MCF 10A (cell line): ENCODE measurements at regions of chr18 and their contacts with region 1.

Region 1: GRCh38 chr18:3995476-3996102 is 459.5 kb downstream of the DLGAP1 start:
- DNase-seq: peak; percentile 77
- H3K4me3 Mint-ChIP-seq: no peak overlapping the region
- H3K27ac Mint-ChIP-seq: no peak overlapping the region
- H3K4me1 Mint-ChIP-seq: no peaks in the 10 kb centered on the region
- H3K27me3 Mint-ChIP-seq: no peaks in the 10 kb centered on the region
- CTCF ChIP-seq: peak; percentile 73

Region 2: DNA sequence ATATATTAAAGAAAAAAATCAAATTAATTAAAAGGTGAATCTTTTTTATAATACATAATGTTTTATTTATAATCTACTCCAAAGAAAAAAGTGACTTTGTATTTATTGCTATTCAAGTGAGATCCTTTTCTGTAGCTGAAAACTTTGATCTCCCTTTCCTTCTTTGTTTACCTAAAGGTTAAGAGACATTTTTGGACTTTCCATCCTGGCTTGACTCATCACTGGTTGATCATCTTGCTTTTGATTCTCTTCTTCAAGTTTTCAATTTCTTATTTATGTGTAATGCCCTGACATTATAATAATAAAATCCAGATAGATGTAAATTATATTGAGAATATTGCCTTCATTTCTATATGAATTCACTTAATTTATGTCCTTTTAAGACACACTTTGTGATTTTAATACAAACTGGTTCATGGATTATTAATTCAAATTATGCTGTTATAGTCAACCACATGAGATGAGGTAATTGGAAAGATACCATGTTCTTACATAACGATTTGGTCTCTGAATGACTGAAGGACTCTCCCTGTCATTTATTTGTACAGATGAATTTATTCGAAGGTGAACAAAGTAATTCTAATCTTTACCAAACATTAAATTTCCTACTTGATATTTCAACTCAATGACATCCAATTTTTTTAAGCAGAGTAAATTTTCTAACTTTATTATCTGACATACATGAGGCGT is 361.2 kb before region 1 on chr18:
- CTCF ChIA-PET with region 1: no interaction called
- POLR2A ChIA-PET with region 1: no interaction called
- intact Hi-C with region 1: no loop called
- DNase-seq: no peak
- H3K4me3 Mint-ChIP-seq: no peak overlapping the region
- H3K27ac Mint-ChIP-seq: no peak overlapping the region
- H3K4me1 Mint-ChIP-seq: no peaks in the 10 kb centered on the region
- H3K27me3 Mint-ChIP-seq: no peaks in the 10 kb centered on the region
- CTCF ChIP-seq: no peak

Region 3: DNA sequence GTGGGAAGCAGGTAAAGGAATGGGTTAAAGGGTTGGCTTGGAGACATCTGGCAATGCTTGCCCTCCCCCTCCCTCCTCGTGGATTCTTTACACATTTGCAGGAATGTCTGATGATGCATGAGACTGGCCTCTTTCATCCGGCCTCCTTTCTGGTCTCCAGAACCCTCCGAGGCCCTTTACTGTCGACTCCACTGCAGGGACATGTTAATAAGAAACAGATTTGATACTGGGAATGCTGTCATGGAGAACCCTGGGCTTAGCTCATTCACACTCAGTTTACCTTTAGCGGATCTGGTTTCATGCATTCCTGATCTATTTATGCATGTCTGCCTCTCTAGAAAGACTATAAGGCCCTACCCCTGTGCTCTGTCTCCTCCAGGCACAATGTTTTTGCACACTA is 306.9 kb before region 1 on chr18:
- CTCF ChIA-PET with region 1: interaction called, 13 read pairs
- POLR2A ChIA-PET with region 1: no interaction called
- intact Hi-C with region 1: no loop called
- DNase-seq: peak; percentile 31
- H3K4me3 Mint-ChIP-seq: no peak overlapping the region
- H3K27ac Mint-ChIP-seq: no peak overlapping the region
- H3K4me1 Mint-ChIP-seq: peaks cover 9% of the 10 kb centered on the region
- H3K27me3 Mint-ChIP-seq: no peaks in the 10 kb centered on the region
- CTCF ChIP-seq: no peak

Region 4: DNA sequence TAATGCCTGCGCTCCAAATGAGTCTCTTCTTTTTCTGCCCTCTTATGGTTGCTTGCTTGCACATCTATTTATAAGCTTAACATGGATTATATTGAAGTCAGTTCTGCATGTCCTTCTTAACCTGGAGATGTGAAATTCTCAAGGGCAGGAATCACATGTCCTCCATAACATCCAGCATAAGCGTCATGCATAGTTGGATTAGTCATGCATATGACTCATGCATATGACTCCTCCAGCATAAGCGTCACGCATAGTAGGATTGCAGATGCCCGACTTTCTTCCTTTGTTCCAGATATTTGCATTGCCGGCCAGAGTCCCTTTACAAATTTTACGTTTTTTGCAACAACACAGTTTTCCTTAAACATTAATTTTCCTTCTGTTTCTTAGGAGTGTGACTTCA is 237.1 kb before region 1 on chr18:
- CTCF ChIA-PET with region 1: interaction called, 10 read pairs
- POLR2A ChIA-PET with region 1: no interaction called
- intact Hi-C with region 1: no loop called
- DNase-seq: peak; percentile 85
- H3K4me3 Mint-ChIP-seq: no peak overlapping the region
- H3K27ac Mint-ChIP-seq: no peak overlapping the region
- H3K4me1 Mint-ChIP-seq: peaks cover 7% of the 10 kb centered on the region
- H3K27me3 Mint-ChIP-seq: no peaks in the 10 kb centered on the region
- CTCF ChIP-seq: no peak

Region 5: DNA sequence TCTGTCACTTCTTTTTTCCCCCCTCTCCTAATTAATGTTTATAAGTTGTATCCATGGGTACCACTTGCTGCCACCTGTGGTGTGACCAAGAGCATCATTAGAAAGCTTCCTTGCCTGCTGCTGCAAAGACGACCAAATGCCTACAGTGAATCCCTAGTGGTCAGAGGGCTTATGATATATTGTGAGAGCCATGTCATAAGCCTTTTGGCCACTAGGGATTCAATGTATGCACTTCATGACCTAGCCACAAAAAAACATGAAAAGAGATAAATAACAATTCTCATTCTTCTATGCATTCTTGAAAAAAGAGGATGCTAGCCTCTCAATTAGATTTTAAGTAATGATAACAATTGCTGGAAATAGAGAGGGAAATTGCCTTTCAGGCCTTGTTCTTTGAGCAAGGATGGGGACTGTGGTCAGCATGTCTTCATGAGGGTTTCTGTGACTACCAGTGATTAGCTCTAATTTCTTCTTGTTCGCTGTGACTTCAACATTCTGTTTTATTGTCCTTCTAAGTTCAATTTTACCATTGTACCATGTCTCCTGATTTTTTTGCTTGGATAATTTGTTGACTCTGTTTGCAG is 110.3 kb before region 1 on chr18:
- CTCF ChIA-PET with region 1: interaction called, 13 read pairs
- POLR2A ChIA-PET with region 1: no interaction called
- intact Hi-C with region 1: no loop called
- DNase-seq: peak; percentile 24
- H3K4me3 Mint-ChIP-seq: no peak overlapping the region
- H3K27ac Mint-ChIP-seq: no peak overlapping the region
- H3K4me1 Mint-ChIP-seq: peaks cover 5% of the 10 kb centered on the region
- H3K27me3 Mint-ChIP-seq: no peaks in the 10 kb centered on the region
- CTCF ChIP-seq: peak; percentile 31

Region 6: DNA sequence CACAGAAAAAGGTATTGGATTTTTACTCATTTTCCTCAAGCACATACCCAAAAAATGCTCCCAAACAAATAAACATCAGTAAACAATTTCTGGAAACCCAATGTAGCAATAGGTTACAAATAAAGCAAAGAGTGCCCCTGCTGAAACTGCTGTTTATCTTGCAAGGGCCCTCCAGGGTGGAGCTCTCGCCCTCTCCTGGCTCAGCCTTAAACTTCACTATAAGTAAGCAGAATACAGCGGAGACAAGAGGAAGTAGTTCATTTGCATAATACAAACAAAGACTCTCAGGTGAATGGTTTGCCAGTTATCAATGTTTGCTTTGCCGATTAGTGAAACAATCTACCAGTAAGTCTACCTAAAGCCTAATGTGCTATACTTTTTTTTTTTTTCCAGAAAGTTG is 21.9 kb after region 1 on chr18:
- CTCF ChIA-PET with region 1: interaction called, 10 read pairs
- POLR2A ChIA-PET with region 1: no interaction called
- intact Hi-C with region 1: no loop called
- DNase-seq: peak; percentile 5
- H3K4me3 Mint-ChIP-seq: no peak overlapping the region
- H3K27ac Mint-ChIP-seq: no peak overlapping the region
- H3K4me1 Mint-ChIP-seq: no peaks in the 10 kb centered on the region
- H3K27me3 Mint-ChIP-seq: no peaks in the 10 kb centered on the region
- CTCF ChIP-seq: no peak